ENCODE measurements at regions of chr4 and their contacts with region 1.

Region 1: DNA sequence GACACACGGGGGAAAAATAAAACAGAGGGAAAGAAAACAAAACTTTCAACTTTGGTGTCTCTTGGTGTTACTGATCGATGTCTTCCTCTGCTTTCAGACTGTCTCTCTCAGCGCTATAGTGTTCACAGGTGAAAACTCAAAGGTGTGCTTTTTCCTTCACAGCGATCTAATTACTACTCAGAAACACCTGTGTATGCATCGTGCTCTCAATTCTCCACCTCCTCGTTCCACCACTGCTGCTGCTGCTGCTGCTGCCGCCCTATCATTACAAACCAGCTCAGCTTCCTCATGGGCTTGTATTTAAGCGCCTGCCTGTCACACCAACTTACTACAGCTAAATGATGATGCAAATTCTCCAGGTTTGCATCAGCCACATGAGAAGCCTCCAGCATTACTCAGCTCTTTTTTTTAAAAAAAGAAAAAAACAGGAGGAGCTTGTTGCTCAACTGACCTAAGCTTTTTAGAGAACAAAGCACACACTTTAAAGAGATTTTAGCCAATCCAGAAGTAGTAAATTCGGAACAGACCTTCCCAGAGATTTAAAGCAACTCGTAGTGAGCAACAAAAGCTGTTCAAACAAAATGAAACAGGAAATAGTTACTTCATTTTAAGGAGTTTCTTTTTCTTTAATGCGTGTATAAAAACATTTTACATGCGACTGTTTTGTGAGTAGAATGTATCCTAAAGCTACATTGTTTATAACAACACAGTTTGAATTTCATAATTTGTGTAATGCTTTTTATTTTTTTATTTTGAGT is at the start of gene SLC7A11:
- DNase-seq: peak; percentile 65 to 95 (median 74)
- ATAC-seq: peak; percentile 81
- H3K4me3 ChIP-seq: peak within 1 kb of the TSS; percentile 69
- H3K27ac ChIP-seq: peak within 1 kb of the TSS; percentile 99
- H3K4me1 ChIP-seq: peaks cover 0 to 11% of the 10 kb centered on the region in 2 experiments; a peak in 4 of 5 replicates
- H3K27me3 ChIP-seq: no peaks in the 10 kb centered on the region
- CTCF ChIP-seq: peak in 1 of 3 experiments; percentile 6; a peak in 1 of 6 replicates
- EP300 ChIP-seq: peak; percentile 91
- POLR2A ChIP-seq: peak; percentile 97
- RAD21 ChIP-seq: no peak
- polyA plus RNA-seq, gene SLC7A11: 4.7 to 9.1 TPM

Region 2: GRCh38 chr4:137421796-137422195 is 820.5 kb before region 1 on chr4:
- CTCF ChIA-PET with region 1: no interaction called
- POLR2A ChIA-PET with region 1: no interaction called
- in situ Hi-C with region 1: no loop called
- intact Hi-C with region 1: no loop called
- DNase-seq: no peak
- ATAC-seq: no peak
- H3K4me3 ChIP-seq: no peak overlapping the region
- H3K27ac ChIP-seq: no peak overlapping the region
- H3K4me1 ChIP-seq: no peaks in the 10 kb centered on the region
- H3K27me3 ChIP-seq: no peaks in the 10 kb centered on the region
- CTCF ChIP-seq: no peak
- EP300 ChIP-seq: no peak
- POLR2A ChIP-seq: no peak
- RAD21 ChIP-seq: no peak

Region 3: GRCh38 chr4:138439143-138439581 is 196.9 kb after region 1 on chr4:
- CTCF ChIA-PET with region 1: no interaction called
- POLR2A ChIA-PET with region 1: interaction called, 3 read pairs
- in situ Hi-C with region 1: no loop called
- intact Hi-C with region 1: loop called (anchors 2 kb)
- DNase-seq: no peak
- ATAC-seq: peak; percentile 16; the same call in 2 of the 3 replicates
- H3K4me3 ChIP-seq: no peak overlapping the region
- H3K27ac ChIP-seq: peak overlapping the region; percentile 67
- H3K4me1 ChIP-seq: peaks cover 0 to 18% of the 10 kb centered on the region in 2 experiments; a peak in 3 of 5 replicates
- H3K27me3 ChIP-seq: no peaks in the 10 kb centered on the region
- CTCF ChIP-seq: no peak
- EP300 ChIP-seq: no peak
- POLR2A ChIP-seq: no peak
- RAD21 ChIP-seq: no peak

Region 4: GRCh38 chr4:138487670-138488069 is 245.4 kb after region 1 on chr4:
- CTCF ChIA-PET with region 1: no interaction called
- POLR2A ChIA-PET with region 1: interaction called, 3 read pairs
- in situ Hi-C with region 1: no loop called
- intact Hi-C with region 1: loop called (anchors 5 kb)
- DNase-seq: no peak
- ATAC-seq: no peak
- H3K4me3 ChIP-seq: no peak overlapping the region
- H3K27ac ChIP-seq: peak overlapping the region; percentile 72; the same call in 1 of the 3 replicates
- H3K4me1 ChIP-seq: peaks cover 0 to 11% of the 10 kb centered on the region in 2 experiments; a peak in 2 of 5 replicates
- H3K27me3 ChIP-seq: no peaks in the 10 kb centered on the region
- CTCF ChIP-seq: no peak
- EP300 ChIP-seq: no peak
- POLR2A ChIP-seq: no peak
- RAD21 ChIP-seq: no peak

Region 5: GRCh38 chr4:138775890-138776289 is 533.6 kb after region 1 on chr4:
- CTCF ChIA-PET with region 1: no interaction called
- POLR2A ChIA-PET with region 1: interaction called, 3 read pairs
- in situ Hi-C with region 1: no loop called
- intact Hi-C with region 1: loop called (anchors 10 kb)
- DNase-seq: peak in 1 of 4 experiments; percentile 43
- ATAC-seq: peak; percentile 61
- H3K4me3 ChIP-seq: peak overlapping the region; percentile 0; the same call in 1 of the 2 replicates
- H3K27ac ChIP-seq: peak overlapping the region; percentile 73
- H3K4me1 ChIP-seq: peaks cover 0 to 33% of the 10 kb centered on the region in 2 experiments; a peak in 3 of 5 replicates
- H3K27me3 ChIP-seq: no peaks in the 10 kb centered on the region
- CTCF ChIP-seq: no peak
- EP300 ChIP-seq: no peak
- POLR2A ChIP-seq: no peak
- RAD21 ChIP-seq: no peak

Region 6: DNA sequence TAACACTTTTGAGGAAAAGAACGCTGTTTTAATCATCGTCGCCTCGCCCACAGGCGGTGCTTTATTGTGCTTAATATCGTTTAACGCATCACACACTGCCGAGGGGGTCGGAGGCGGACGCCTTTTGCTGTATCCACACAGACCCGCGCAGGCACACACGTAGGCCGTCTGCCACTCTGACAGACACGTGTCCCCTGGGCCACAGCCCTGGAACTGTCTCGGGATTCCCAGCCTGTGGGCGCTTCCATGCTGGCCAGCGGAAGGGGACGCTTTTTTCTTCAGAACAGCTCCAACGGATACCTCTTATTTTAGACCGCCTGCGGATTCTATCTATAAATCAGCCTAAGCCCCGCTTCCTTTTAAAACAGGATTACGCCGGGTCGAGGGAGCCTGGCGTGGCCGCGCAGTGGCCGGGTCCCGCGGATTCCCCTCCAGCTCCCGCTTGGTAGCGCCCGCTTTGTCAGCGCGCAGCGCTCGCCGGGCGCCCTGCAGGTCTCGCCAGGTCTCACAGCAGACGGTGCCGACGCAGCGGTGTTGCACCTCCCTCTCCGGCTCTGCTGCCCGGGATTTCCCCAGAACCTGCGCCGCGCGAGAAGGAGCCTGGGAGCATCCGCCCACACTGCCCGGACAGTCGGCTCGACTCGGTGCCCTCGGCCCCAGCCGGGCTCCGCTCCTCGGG is 773.2 kb after region 1 on chr4 and contains the start of gene NOCT:
- CTCF ChIA-PET with region 1: no interaction called
- POLR2A ChIA-PET with region 1: no interaction called
- in situ Hi-C with region 1: no loop called
- intact Hi-C with region 1: loop called (anchors 10 kb)
- DNase-seq: peak; percentile 86 to 92 (median 88)
- ATAC-seq: peak; percentile 94
- H3K4me3 ChIP-seq: peak within 1 kb of the TSS; percentile 92
- H3K27ac ChIP-seq: peak within 1 kb of the TSS; percentile 92
- H3K4me1 ChIP-seq: peaks cover 24 to 32% of the 10 kb centered on the region in 2 experiments; a peak in 4 of 5 replicates
- H3K27me3 ChIP-seq: no peaks in the 10 kb centered on the region
- CTCF ChIP-seq: peak in 1 of 3 experiments; percentile 4; a peak in 1 of 6 replicates
- EP300 ChIP-seq: no peak; the same call in 1 of the 2 replicates
- POLR2A ChIP-seq: peak; percentile 91
- RAD21 ChIP-seq: no peak
- polyA plus RNA-seq, gene NOCT: 1.3 to 2.8 TPM